Activated T-helper 1 cell treated with anti-CD3 and anti-CD28 coated beads, Interleukin-12 subunit alpha, Interleukin-12 subunit beta, Interleukin-2, Interleukin-4 antibody, amounts not matched to agents 30 ng/mL and 10 ng/mL and 1 ng/mL, durations not matched to agents 14 hours and 24 hours and 36 hours (primary cell): ENCODE measurements at regions of chr13 and their contacts with region 1.

Region 1: DNA sequence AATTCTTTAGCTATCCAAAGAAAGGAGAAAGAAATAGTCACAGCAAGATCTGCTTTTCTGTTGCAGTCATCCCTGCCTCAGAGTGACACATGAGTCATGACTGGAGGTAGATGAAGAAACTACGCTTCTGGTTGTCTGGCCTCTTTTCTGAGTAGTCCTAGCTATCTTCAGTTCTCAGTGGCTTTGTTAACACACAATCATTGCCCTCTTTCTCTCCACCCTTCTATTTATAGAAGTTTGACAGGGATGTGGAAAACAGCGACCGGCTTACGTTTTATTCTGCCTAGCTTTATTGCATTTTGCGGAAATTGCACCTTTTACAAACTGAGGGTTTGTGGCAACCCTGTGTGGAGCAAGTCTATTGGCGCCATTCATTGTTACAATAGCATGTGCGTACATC is 26.7 kb downstream of the SPATA13 start:
- DNase-seq: peak; percentile 3
- H3K4me3 Mint-ChIP-seq: peak overlapping the region; percentile 42
- H3K27ac Mint-ChIP-seq: peak overlapping the region; percentile 86
- H3K4me1 Mint-ChIP-seq: peaks cover 63% of the 10 kb centered on the region
- H3K27me3 Mint-ChIP-seq: no peaks in the 10 kb centered on the region

Region 2: DNA sequence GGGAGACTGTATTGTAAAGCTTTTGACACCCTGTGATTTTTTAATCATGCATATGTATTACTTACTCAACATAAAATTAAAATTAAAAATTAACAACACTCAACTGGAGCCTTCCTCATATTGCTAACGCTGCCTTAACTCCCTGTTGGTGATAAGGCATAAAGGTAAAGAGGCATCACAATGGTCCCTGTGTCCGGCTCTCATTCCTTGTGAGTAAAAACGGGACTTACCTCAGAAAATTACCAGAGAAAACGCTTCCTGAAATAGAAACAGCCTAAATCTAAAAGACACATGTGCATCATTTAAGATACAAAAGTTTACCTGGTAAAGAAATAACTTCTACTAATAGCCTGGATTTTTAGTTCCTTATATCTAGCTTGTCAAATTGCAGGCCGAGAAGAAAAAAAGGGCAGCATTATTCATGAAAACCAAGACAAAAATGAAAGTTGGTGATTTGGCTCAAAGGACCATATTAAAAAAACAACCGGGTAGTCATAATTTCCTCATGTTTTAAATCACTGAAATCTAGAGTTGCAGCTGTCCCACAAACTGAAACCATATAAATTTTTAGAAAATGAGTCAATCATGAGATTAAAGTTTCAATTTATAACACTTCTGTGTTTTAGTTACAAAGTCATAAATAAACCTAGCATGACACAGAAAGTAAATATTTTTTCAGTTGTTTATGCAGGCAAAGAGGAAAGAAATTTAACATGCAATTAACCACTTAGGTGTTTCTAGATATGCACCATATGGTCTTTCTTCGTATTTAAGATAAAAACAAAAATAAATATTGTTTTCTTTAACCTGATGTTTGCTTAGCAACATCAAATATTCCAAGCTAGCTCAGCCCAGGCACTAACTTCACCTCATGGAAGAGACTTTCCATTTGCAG is 392.7 kb before region 1 on chr13:
- intact Hi-C with region 1: loop called (anchors 10 kb)
- DNase-seq: no peak
- H3K4me3 Mint-ChIP-seq: no peak overlapping the region
- H3K27ac Mint-ChIP-seq: no peak overlapping the region
- H3K4me1 Mint-ChIP-seq: peaks cover under 1% of the 10 kb centered on the region
- H3K27me3 Mint-ChIP-seq: no peaks in the 10 kb centered on the region

Region 3: DNA sequence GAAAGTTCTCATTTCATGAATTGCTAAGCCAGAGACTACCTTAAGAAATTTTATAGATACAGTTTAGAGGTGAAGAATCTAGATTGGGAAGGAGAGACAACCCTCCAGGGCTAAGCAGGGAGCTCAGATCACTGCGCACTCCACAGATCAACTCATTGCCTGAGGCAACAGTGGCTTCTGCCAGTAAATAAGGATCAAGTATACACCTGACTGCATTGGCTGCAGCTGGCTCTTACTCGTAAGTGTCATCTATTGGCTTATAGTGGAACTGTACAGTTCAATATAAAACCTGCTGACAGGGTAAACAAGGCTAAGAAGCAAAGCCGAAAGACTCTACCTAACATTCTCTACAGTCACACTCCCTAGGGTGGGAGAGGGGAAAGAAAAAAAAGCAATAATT is 271.9 kb before region 1 on chr13:
- intact Hi-C with region 1: no loop called
- DNase-seq: no peak
- H3K4me3 Mint-ChIP-seq: no peak overlapping the region
- H3K27ac Mint-ChIP-seq: no peak overlapping the region
- H3K4me1 Mint-ChIP-seq: peaks cover 11% of the 10 kb centered on the region
- H3K27me3 Mint-ChIP-seq: peaks cover 37% of the 10 kb centered on the region

Region 4: DNA sequence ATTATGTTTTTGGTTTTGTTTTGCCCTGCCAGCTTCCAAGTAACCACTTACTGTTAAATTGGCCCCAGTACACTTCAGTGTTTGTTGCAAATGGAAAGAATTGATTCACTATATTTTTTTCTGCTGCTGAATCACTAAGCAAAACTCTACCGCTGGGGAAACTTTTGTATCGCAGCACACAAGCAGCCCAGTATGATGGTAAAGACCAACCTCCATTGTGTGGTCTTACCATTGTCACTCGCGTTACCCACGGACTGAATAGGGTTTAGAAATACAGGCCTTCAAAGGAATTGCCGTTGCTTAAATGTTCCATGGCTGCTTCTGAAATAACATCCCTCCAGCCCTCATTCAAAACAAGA is 18.8 kb before region 1 on chr13:
- intact Hi-C with region 1: loop called (anchors 1 kb)
- DNase-seq: no peak
- H3K4me3 Mint-ChIP-seq: no peak overlapping the region
- H3K27ac Mint-ChIP-seq: peak overlapping the region; percentile 77
- H3K4me1 Mint-ChIP-seq: peaks cover 55% of the 10 kb centered on the region
- H3K27me3 Mint-ChIP-seq: peaks cover 4% of the 10 kb centered on the region

Region 5: DNA sequence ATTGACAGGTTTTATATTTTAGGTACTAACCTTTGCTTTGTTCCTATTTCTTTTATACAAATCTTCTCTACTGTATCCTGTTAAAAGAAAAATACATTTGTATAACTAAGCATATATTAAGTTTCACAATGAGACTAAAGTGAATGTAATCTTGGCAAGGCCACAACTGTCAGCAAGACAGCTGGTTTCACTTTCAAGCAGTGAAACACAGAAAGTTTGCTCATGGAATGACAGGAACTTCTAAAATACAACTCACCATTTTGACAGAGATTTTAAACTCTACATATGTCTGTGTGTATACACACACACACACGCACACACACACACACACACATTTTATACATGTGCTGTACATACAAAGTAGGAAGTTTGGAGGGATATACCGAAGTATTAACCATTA is 272.0 kb after region 1 on chr13:
- intact Hi-C with region 1: no loop called
- DNase-seq: no peak
- H3K4me3 Mint-ChIP-seq: no peak overlapping the region
- H3K27ac Mint-ChIP-seq: peak overlapping the region; percentile 50
- H3K4me1 Mint-ChIP-seq: peaks cover 37% of the 10 kb centered on the region
- H3K27me3 Mint-ChIP-seq: no peaks in the 10 kb centered on the region

Region 6: GRCh38 chr13:25571238-25571637 is 1384.1 kb after region 1 on chr13:
- intact Hi-C with region 1: no loop called
- DNase-seq: no peak
- H3K4me3 Mint-ChIP-seq: no peak overlapping the region
- H3K27ac Mint-ChIP-seq: no peak overlapping the region
- H3K4me1 Mint-ChIP-seq: peaks cover 14% of the 10 kb centered on the region
- H3K27me3 Mint-ChIP-seq: peaks cover 29% of the 10 kb centered on the region